ENCODE measurements at regions of chr3 and their contacts with region 1.

Region 1: DNA sequence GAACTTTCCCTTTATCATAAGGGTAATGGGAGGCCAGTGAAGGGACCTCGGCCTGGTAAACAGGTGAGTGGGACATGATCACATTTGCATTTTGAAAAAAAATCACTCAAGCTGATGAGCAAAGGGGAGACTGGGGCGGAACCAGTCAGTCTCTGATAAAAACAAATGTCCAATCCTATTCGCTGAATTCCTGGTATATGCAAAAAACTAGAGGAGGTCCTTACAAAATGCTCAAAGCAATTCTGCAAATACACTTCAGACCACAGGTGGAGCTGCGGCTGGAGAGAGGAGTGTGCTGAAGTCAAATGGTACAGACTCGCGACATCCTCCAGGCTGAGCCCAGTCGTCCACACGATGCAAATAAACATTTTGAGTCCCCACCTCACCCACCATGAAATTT is 166.7 kb downstream of the FOXP1 start:
- DNase-seq: peak in 1 of 2 donors; percentile 75
- ATAC-seq: peak in 2 of 3 donors; percentile 31 to 51
- H3K4me3 ChIP-seq: no peak overlapping the region
- H3K4me3 Mint-ChIP-seq: peak overlapping the region; percentile 6
- H3K27ac ChIP-seq: peak overlapping the region; percentile 69
- H3K27ac Mint-ChIP-seq: peak overlapping the region in 1 of 2 donors; percentile 88
- H3K4me1 ChIP-seq: peaks cover 19% of the 10 kb centered on the region
- H3K4me1 Mint-ChIP-seq: peaks cover 50 to 57% of the 10 kb centered on the region in 2 donors
- H3K27me3 ChIP-seq: no peaks in the 10 kb centered on the region
- H3K27me3 Mint-ChIP-seq: no peaks in the 10 kb centered on the region
- CTCF ChIP-seq: no peak

Region 2: DNA sequence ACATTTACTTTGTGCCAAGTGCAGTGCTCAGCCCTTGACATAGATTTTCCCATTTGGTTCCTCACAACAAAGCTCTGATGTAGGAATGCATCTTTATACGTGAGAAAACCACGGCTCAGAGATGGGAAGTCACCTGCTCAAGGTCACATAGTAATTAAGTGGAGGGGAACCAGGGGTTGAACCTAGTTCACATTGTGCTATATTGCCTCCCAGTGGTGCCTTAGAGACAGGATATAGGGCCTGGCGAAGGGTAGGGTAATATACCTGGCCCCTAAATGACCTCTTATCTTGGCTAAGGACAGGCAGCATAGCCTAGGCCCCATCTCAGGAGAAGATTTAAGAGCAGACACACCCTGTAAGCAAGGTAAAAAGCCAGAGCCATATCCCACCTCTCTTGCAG is 95.1 kb after region 1 on chr3:
- intact Hi-C with region 1: loop called (anchors 5 kb)
- DNase-seq: peak in 1 of 2 donors; percentile 85
- ATAC-seq: peak; percentile 78 to 85 (median 83)
- H3K4me3 ChIP-seq: no peak overlapping the region
- H3K4me3 Mint-ChIP-seq: no peak overlapping the region
- H3K27ac ChIP-seq: no peak overlapping the region
- H3K27ac Mint-ChIP-seq: peak overlapping the region in 1 of 2 donors; percentile 63
- H3K4me1 ChIP-seq: peaks cover 18% of the 10 kb centered on the region
- H3K4me1 Mint-ChIP-seq: peaks cover 0 to 15% of the 10 kb centered on the region in 2 donors
- H3K27me3 ChIP-seq: no peaks in the 10 kb centered on the region
- H3K27me3 Mint-ChIP-seq: no peaks in the 10 kb centered on the region
- CTCF ChIP-seq: peak; percentile 40

Region 3: GRCh38 chr3:71536376-71536965 is 119.6 kb after region 1 on chr3:
- intact Hi-C with region 1: no loop called
- DNase-seq: no peak
- ATAC-seq: no peak
- H3K4me3 ChIP-seq: no peak overlapping the region
- H3K4me3 Mint-ChIP-seq: no peak overlapping the region
- H3K27ac ChIP-seq: no peak overlapping the region
- H3K27ac Mint-ChIP-seq: no peak overlapping the region
- H3K4me1 ChIP-seq: no peaks in the 10 kb centered on the region
- H3K4me1 Mint-ChIP-seq: peaks cover 2 to 15% of the 10 kb centered on the region in 2 donors
- H3K27me3 ChIP-seq: no peaks in the 10 kb centered on the region
- H3K27me3 Mint-ChIP-seq: no peaks in the 10 kb centered on the region
- CTCF ChIP-seq: no peak

Measured in natural killer cell (primary cell).